ENCODE measurements at regions of chr19 and their contacts with region 1.

Region 1: GRCh38 chr19:19732579-19733501 is at the start of gene ZNF14:
- DNase-seq: peak; percentile 90 to 94
- ATAC-seq: peak; percentile 100
- H3K4me3 ChIP-seq: peak within 1 kb of the TSS; percentile 98
- H3K27ac ChIP-seq: peak within 1 kb of the TSS; percentile 69
- H3K4me1 ChIP-seq: peaks cover 2% of the 10 kb centered on the region
- H3K27me3 ChIP-seq: no peaks in the 10 kb centered on the region
- CTCF ChIP-seq: no peak
- total RNA-seq, gene ZNF14: 1.5 to 3.4 (median 2.1) TPM

Region 2: DNA sequence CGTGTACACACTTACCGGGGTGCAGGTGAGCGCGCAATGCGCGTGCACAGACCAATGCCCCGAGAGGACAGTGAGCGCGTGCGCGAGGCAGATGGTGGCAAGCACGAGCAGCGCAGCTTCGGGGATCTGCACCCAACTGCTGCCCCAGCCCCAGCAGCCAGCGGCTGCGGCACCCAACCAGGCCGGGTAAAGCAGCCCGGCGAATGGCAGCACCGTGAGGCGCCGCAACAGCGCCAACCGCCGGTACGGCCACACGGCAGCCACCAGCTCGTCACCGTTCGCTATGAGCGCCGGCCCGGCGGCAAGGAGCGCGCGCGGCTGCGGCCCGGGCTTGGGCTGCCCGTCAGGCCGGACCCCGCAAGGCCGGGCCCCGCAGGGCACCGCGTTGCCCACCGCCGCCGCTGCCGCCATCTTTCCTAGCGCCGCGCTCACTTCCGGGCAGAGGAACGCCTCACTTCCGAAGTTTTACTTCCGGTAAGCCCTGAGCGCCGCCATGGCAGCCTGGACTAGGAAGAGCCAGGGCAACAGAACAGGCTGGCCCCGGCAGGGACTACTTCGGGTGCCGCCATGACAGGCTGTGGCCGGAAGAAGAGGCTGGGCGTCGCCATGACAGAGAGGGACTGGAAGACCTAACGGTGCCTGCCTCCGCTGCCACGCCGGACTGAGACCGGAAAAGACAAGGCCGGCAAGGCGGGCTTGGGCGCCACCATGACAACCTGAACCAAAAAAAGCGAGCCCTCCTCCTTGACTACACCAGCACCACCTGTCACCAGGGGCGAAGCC is 69.4 kb before region 1 on chr19 and contains the start of gene ATP13A1:
- intact Hi-C with region 1: loop called in 1 of 2 experiments (anchors 5 kb)
- DNase-seq: peak; percentile 96 to 99
- ATAC-seq: peak; percentile 92 to 96 (median 95)
- H3K4me3 ChIP-seq: peak within 1 kb of the TSS; percentile 99
- H3K27ac ChIP-seq: peak within 1 kb of the TSS; percentile 93
- H3K4me1 ChIP-seq: peaks cover 14% of the 10 kb centered on the region
- H3K27me3 ChIP-seq: no peaks in the 10 kb centered on the region
- CTCF ChIP-seq: peak; percentile 23
- total RNA-seq, gene ATP13A1: 17.5 to 27.5 (median 21.4) TPM

Region 3: DNA sequence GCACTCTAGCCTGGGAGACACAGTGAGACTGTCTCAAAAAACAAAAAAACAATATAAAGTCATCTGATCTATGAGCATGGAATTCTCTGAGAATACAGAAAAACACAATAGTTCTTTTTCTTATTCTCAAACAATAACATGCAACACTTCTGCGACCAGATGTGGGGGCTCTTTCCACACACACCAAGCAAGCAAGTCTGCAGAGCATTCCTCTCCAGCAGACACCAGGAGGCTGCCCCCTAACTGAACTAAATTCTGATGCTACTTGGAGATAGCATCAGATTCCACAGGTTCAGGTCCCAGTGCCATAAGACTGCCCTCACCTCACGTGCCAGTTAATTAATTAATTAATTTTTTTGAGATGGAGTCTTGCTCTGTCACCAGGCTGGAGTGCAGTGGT is 36.5 kb before region 1 on chr19:
- intact Hi-C with region 1: no loop called
- DNase-seq: no peak
- ATAC-seq: no peak
- H3K4me3 ChIP-seq: no peak overlapping the region
- H3K27ac ChIP-seq: no peak overlapping the region
- H3K4me1 ChIP-seq: no peaks in the 10 kb centered on the region
- H3K27me3 ChIP-seq: no peaks in the 10 kb centered on the region
- CTCF ChIP-seq: no peak

Region 4: GRCh38 chr19:19776041-19777008 is 43.5 kb after region 1 on chr19:
- intact Hi-C with region 1: loop called in 1 of 2 experiments (anchors 5 kb)
- DNase-seq: peak; percentile 96 to 98
- ATAC-seq: peak; percentile 99 to 100 (median 100)
- H3K4me3 ChIP-seq: peak overlapping the region; percentile 83
- H3K27ac ChIP-seq: peak overlapping the region; percentile 83
- H3K4me1 ChIP-seq: peaks cover 16% of the 10 kb centered on the region
- H3K27me3 ChIP-seq: no peaks in the 10 kb centered on the region
- CTCF ChIP-seq: no peak